ENCODE measurements at regions of chr14 and their contacts with region 1.

Region 1: GRCh38 chr14:81390696-81391095 is 9.4 kb downstream of the STON2 start:
- DNase-seq: no peak
- H3K4me3 ChIP-seq: no peak overlapping the region
- CTCF ChIP-seq: no peak

Region 2: DNA sequence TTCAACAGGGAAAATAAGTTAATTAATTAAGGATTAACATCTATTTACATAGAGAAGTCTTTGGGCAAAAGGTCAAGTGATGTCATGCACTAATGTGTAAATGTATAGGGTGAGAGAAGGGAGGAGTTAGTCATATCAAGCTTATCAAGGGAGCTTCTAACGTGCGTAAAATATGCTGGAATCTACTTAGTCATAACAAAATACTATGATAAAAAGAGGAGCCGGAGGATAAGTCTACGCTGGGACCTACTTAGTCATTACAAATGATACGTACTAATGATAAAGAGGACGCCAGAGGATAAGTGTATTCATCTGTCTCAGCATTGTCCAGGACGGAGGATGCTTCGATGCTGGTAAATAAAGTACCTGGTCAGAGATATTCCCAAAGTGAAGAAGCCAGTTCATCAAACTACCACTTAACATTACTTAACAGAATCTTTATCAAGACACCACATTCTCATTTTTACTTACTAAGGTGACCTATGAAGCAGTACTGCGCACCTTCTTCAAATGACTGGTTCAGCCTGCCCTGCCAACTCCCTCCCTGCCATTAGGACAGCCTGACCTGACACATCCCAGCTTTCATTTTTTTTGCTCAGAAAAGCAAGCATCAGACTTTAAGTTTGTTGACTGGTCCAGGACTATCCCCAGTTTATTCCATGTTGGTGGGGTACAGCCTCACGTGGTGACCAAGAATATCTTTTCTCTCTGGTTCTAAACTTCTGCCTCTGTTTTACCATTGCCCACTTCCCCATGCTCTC is 103.5 kb before region 1 on chr14:
- in situ Hi-C with region 1: loop called (anchors 5 kb)
- DNase-seq: no peak
- H3K4me3 ChIP-seq: no peak overlapping the region
- CTCF ChIP-seq: no peak